ENCODE measurements at regions of chr11 and their contacts with region 1.

Region 1: GRCh38 chr11:18395735-18396504 is 1.6 kb downstream of the LDHA start:
- DNase-seq: peak; percentile 91 to 98
- H3K4me3 ChIP-seq: peak overlapping the region; percentile 85 to 99
- H3K27ac ChIP-seq: peak overlapping the region; percentile 94 to 98
- H3K4me1 ChIP-seq: peaks cover 5 to 18% of the 10 kb centered on the region in 2 donors
- H3K27me3 ChIP-seq: no peaks in the 10 kb centered on the region
- CTCF ChIP-seq: no peak

Region 2: GRCh38 chr11:17986007-17986710 is 409.8 kb before region 1 on chr11:
- intact Hi-C with region 1: loop called (anchors 5 kb)
- DNase-seq: peak; percentile 13 to 71
- H3K4me3 ChIP-seq: no peak overlapping the region
- H3K27ac ChIP-seq: peak overlapping the region; percentile 86
- H3K4me1 ChIP-seq: peaks cover 8 to 19% of the 10 kb centered on the region in 2 donors
- H3K27me3 ChIP-seq: no peaks in the 10 kb centered on the region
- CTCF ChIP-seq: no peak

Region 3: GRCh38 chr11:18321980-18322711 is 73.8 kb before region 1 on chr11 and contains the starts of genes GTF2H1 and HPS5:
- intact Hi-C with region 1: loop called (anchors 1 kb)
- DNase-seq: peak; percentile 87 to 98
- H3K4me3 ChIP-seq: peak within 1 kb of the TSS; percentile 65 to 93
- H3K27ac ChIP-seq: peak within 1 kb of the TSS; percentile 93 to 97
- H3K4me1 ChIP-seq: peaks cover 17 to 29% of the 10 kb centered on the region in 2 donors
- H3K27me3 ChIP-seq: no peaks in the 10 kb centered on the region
- CTCF ChIP-seq: no peak
- total RNA-seq, gene GTF2H1: 33.7 TPM
- total RNA-seq, gene HPS5: 31.7 TPM

Region 4: DNA sequence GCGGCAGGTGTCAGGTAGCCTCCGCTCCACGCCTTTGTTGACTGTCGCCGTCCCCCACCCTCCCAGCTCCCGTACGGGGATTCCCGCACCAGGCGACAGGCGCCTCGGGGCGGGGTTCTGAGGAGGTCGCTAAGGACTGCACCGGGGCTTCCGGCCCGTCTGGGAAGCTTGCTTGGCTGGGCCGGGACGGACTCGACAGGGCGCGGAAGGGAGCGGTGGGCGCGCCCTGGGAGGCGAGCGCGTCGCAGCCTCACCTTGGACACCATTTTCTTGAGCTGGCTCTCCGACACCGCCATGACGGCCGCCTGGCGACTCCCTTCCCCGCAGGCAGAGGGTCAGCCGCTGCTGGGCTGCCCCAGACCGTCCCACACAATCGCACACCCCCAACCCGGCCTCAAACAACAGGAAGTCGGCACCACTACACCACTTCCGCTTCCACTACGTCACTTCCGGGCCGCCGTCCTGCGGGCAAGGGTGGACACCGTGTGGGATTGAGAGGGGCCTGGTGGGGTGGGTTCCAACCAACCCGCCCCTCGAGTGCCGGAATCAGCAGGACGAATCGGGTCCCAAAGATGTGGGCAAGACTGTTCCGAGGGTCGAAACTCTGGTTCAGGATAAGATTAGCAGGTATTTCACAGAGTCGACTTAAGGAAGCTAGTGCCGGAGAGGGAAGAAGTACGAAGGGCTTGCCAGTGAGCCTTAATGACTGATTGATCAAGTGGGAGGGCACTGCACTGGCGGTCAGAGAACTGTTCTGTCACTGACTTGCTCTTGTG is 130.8 kb after region 1 on chr11 and contains the start of gene TSG101:
- intact Hi-C with region 1: loop called (anchors 5 kb)
- DNase-seq: peak; percentile 60 to 96
- H3K4me3 ChIP-seq: peak within 1 kb of the TSS; percentile 79 to 93
- H3K27ac ChIP-seq: peak within 1 kb of the TSS; percentile 90 to 94
- H3K4me1 ChIP-seq: peaks cover 0 to 7% of the 10 kb centered on the region in 2 donors
- H3K27me3 ChIP-seq: no peaks in the 10 kb centered on the region
- CTCF ChIP-seq: no peak
- total RNA-seq, gene TSG101: 20.3 TPM

Region 5: DNA sequence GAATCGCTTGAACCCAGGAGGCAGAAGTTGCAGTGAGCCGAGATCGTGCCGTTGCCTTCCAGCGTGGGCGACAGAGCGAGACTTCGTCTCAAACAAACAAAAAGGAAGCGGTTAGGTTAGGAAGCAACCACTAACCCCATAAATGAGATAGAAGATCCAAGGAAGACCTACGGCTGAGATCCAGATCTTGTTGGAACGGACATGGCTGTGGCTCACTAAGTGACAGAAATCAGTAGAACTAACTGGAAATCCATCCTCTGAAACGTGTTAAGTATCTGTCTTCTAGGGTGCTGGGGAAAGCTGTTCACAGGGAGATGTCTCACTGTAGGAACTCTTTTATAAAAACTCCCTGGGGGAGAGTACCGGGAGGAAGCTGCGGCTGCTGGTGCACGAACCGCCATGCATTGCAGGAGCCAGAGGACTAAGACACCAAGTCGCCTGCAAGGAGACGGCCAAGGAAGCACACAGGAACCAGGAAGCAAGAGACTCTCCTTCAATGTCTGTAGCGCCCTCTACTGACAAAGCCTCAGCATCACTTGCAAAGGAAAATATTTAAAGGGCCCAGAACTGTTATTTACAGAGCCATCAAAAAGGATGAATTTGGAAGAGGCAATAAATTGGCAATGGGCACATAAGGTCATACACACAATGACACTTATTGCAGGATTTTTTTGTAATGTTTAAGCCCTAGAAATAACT is 255.1 kb after region 1 on chr11:
- intact Hi-C with region 1: no loop called
- DNase-seq: peak in 1 of 2 donors; percentile 72
- H3K4me3 ChIP-seq: no peak overlapping the region
- H3K27ac ChIP-seq: no peak overlapping the region
- H3K4me1 ChIP-seq: no peaks in the 10 kb centered on the region
- H3K27me3 ChIP-seq: no peaks in the 10 kb centered on the region
- CTCF ChIP-seq: peak; percentile 23 to 47 (median 28)

Region 6: DNA sequence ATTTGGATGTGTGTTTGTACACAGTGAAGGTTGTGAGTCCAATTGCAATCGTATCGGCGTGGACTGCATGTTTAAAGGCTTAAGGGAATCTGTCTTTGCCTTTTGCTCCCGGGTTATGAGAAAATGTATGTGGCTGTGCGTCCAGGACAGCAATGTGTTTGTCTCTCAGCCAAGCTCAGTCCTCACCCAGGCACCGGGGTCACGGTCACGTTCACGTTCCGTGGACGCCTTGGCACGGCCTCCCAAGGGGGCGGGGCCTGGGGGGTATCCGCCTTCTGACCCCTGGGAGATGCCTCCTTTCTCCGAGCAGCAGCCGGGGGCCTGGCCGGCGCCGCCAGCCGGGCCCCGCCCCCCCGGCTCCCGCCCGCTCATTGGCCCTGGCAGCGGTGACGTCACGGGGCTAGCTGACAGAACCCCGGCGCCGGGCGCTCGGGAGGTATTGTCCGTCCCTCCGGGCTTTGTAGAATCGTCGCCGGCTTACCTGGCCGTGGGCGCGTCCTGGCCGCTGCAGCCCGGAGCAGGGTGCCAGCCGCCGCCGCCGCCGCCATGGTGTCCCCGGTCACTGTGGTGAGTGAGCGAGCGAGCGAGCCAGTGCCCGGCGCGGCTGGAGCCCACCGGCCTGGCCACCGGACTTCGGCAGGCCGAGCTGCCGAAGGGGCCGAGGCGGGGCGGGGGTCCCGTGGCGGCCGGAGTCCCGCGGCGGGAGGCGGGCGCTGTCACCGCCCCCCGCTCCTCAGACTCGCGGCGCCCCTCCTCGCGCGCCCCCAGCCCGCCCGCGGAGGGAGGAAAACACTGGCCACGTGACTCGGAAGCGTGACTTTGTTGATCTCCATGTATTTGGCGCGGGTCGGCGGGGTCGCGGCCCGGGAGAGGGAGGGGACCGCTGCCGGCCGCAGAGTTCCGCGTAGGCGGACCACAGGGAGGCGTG is 302.7 kb after region 1 on chr11 and contains the start of gene TMEM86A:
- intact Hi-C with region 1: loop called (anchors 5 kb)
- DNase-seq: peak; percentile 88 to 98
- H3K4me3 ChIP-seq: peak within 1 kb of the TSS; percentile 96 to 99
- H3K27ac ChIP-seq: peak within 1 kb of the TSS; percentile 73 to 84
- H3K4me1 ChIP-seq: peaks cover 0 to 5% of the 10 kb centered on the region in 2 donors
- H3K27me3 ChIP-seq: no peaks in the 10 kb centered on the region
- CTCF ChIP-seq: no peak
- total RNA-seq, gene TMEM86A: 4.8 TPM

Measured in ascending aorta (tissue), 2 donors.